WTC11 (cell line): ENCODE measurements at regions of chr16 and their contacts with region 1.

Region 1: DNA sequence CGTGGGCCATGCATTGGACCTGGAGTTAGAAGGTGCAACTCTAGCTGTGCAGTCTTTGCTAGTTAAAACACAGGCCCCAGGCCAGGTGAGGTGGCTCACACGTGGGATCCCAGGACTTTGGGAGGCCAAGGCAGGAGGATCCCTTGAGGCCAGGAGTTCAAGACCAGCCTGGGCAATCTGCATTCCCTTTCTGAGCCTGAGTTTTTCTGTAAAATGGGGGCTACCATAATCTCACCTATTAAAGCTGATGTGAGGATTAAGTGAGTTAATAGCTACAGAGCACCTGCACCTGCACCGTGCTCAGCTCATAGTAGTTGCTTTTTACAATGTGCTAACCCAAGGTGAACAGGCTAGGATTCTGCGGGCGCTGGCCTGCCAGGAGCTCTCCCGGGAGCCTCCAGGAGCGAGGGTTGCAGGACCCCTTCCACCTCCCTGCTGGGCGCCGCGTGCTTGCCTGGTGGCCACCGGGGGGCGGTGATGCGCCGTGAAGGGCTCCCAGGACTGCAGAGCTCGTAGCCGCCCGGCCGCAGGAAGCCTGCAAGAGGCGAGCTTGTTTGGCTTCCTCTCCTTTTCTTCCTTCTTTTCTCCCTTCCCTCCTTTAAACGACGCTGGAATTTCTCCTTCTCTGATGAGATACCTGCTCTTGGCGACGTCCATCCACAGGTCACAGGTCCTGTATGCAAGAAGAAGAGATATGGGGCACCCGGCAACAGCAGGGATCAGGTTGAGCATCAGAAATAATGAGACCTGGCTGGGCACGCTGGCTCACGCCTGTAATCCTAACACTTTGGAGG is 51.3 kb downstream of the ZFP90 start:
- DNase-seq: peak; percentile 94
- ATAC-seq: peak; percentile 99
- H3K4me3 Mint-ChIP-seq: peak overlapping the region; percentile 34; the same call in 1 of the 2 replicates
- H3K27ac Mint-ChIP-seq: peak overlapping the region; percentile 71; the same call in 1 of the 2 replicates
- H3K4me1 Mint-ChIP-seq: peaks cover 11% of the 10 kb centered on the region
- H3K27me3 Mint-ChIP-seq: peaks cover 3% of the 10 kb centered on the region
- CTCF ChIP-seq: peak; percentile 81

Region 2: GRCh38 chr16:68520649-68521086 is 69.7 kb before region 1 on chr16:
- CTCF ChIA-PET with region 1: interaction called, 17 read pairs
- POLR2A ChIA-PET with region 1: no interaction called
- DNase-seq: peak; percentile 95
- ATAC-seq: peak; percentile 99
- H3K4me3 Mint-ChIP-seq: peak overlapping the region; percentile 41
- H3K27ac Mint-ChIP-seq: no peak overlapping the region
- H3K4me1 Mint-ChIP-seq: peaks cover 3% of the 10 kb centered on the region; the same call in 1 of the 2 replicates
- H3K27me3 Mint-ChIP-seq: peaks cover 12% of the 10 kb centered on the region
- CTCF ChIP-seq: peak; percentile 95

Region 3: GRCh38 chr16:68612996-68613395 is 22.6 kb after region 1 on chr16:
- CTCF ChIA-PET with region 1: interaction called, 20 read pairs
- POLR2A ChIA-PET with region 1: no interaction called
- DNase-seq: no peak
- ATAC-seq: no peak
- H3K4me3 Mint-ChIP-seq: no peak overlapping the region
- H3K27ac Mint-ChIP-seq: no peak overlapping the region
- H3K4me1 Mint-ChIP-seq: no peaks in the 10 kb centered on the region
- H3K27me3 Mint-ChIP-seq: peaks cover 3% of the 10 kb centered on the region; the same call in 1 of the 2 replicates
- CTCF ChIP-seq: no peak

Region 4: DNA sequence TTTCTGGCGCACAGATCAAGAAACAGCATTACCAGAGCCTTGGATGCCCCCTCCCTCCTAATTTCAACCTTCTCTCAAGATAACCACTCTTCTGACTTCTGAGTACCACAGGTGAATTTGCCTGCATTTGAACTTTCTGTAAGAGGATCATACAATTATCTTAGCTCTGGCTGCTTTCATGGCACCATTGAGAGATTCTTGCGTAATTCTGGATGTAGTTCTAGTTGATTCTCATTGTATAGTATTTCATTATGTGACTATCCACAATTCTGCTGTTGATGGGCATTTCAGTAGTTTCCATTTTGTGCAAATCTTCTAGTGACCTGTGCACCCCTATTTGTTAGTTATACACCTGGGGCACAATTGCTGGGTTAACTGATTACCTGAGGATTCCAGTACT is 62.3 kb after region 1 on chr16:
- CTCF ChIA-PET with region 1: interaction called, 11 read pairs
- POLR2A ChIA-PET with region 1: interaction called, 3 read pairs
- DNase-seq: no peak
- ATAC-seq: no peak
- H3K4me3 Mint-ChIP-seq: no peak overlapping the region
- H3K27ac Mint-ChIP-seq: peak overlapping the region; percentile 68
- H3K4me1 Mint-ChIP-seq: peaks cover 32% of the 10 kb centered on the region
- H3K27me3 Mint-ChIP-seq: no peaks in the 10 kb centered on the region
- CTCF ChIP-seq: no peak

Region 5: GRCh38 chr16:68704232-68704867 is 114.0 kb after region 1 on chr16:
- CTCF ChIA-PET with region 1: interaction called, 15 read pairs
- POLR2A ChIA-PET with region 1: no interaction called
- DNase-seq: peak; percentile 93
- ATAC-seq: peak; percentile 84
- H3K4me3 Mint-ChIP-seq: no peak overlapping the region
- H3K27ac Mint-ChIP-seq: peak overlapping the region; percentile 74; the same call in 1 of the 2 replicates
- H3K4me1 Mint-ChIP-seq: peaks cover 11% of the 10 kb centered on the region
- H3K27me3 Mint-ChIP-seq: no peaks in the 10 kb centered on the region
- CTCF ChIP-seq: peak; percentile 62

Region 6: DNA sequence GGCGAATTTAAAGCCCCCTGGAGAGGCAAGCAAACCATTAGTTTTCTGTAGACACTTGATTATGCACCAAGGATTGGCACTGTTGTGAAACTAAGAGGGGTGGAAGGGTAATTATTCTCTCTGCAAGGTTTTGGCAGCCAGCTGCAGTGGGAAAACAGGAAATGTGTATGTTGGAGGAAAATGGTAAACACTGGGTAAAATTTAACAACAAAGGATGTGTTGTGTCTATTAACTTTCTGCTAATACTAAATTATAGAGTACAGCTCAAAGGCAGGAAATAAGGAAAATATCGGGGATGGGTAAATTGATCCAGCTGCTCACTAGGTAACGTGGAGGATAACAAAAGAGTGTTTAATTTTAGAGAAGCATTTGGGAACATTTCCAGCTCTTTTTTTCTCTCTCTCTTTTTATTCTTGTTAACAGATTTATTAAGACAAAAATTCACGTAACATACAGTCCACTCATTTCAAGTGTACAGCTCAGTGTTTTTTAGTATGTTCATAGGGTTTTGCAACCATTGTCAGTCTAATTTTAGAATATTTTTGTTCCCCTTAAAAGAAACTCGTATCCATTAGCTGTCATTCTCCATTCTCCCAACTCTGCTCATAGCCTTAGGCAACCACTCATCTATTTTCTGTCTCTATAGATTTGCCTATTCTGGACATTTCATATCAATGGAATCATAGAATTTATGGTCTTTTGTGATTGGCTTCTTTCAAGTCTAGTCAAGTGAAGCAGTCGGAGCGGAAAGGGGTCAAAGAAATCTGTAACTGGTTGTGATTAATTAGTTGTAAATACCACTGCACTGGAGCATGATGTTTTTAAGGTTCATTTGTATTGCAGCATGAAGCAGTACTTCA is 294.7 kb after region 1 on chr16:
- CTCF ChIA-PET with region 1: no interaction called
- POLR2A ChIA-PET with region 1: no interaction called
- DNase-seq: no peak
- ATAC-seq: no peak
- H3K4me3 Mint-ChIP-seq: no peak overlapping the region
- H3K27ac Mint-ChIP-seq: 0 out of 2 replicates have a peak overlapping the region, but pooled peaks have one; percentile 2
- H3K4me1 Mint-ChIP-seq: peaks cover 10% of the 10 kb centered on the region
- H3K27me3 Mint-ChIP-seq: no peaks in the 10 kb centered on the region
- CTCF ChIP-seq: no peak